ENCODE measurements at regions of chr17 and their contacts with region 1.

Region 1: DNA sequence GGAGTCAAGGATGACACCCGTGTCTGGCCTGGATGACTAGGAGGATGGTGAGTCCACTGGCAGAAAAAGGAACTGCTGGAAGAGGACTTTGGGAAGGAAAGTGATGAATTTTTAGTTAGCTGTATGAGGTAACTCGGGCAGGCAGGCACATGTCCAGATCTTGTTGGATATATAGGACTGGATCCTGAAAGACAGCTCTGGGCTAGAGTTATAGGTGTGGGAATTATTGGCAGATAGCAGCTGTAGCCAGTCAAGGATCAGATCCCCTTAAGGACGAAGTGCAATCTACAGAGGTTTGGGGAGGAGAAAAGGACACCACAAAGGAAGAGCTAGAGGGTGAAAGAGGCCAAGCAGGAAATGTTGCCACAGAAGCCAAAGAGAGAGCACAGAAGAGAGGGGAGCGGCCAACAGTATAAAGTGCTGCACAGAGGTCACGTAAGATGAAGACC is 10.1 kb downstream of the CYB5D1 start:
- DNase-seq: peak; percentile 74
- H3K4me3 ChIP-seq: no peak overlapping the region
- H3K27ac ChIP-seq: no peak overlapping the region
- H3K4me1 ChIP-seq: peaks cover 12% of the 10 kb centered on the region
- H3K27me3 ChIP-seq: no peaks in the 10 kb centered on the region
- CTCF ChIP-seq: peak in 1 of 2 donors; percentile 6

Region 2: DNA sequence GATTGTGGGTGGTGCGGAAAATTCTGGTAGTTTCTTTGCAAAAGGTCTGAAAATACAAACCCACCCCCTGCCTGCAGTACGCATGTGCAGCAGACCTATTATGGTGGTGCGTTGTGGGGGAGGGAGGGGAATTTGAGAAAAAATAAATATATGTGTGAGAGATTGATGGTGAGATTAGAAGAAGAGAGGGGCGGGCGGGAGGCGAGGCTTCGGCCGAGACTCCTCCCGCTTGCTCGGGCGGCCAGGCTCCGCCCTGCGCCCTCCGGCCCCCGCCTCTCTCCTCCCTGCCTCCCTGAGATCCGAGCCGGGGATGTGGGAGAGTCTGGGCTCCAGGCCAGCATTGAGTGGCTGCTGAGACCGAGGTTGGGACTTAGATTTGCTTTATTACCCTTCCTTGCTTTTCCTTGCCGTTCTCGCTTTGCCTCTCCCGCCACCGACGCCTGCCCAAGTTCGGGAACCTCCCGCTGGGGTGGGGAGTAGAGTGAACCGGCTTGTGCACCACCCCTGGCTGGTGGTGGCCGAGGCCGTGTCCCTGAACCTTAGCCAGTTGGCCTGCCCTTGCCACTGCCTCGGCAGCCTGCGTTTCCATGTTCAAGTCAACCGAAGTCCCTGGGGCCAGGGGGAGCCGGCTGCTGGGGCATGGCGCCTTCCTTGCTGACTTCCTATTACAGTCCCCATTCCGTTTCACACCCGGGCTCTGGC is 19.7 kb after region 1 on chr17:
- CTCF ChIA-PET with region 1: no interaction called
- dilution Hi-C with region 1: no loop called
- in situ Hi-C with region 1: no loop called
- intact Hi-C with region 1: loop called (anchors 2 kb)
- DNase-seq: peak; percentile 92
- H3K4me3 ChIP-seq: peak overlapping the region; percentile 80 to 91 (median 90)
- H3K27ac ChIP-seq: peak overlapping the region; percentile 70
- H3K4me1 ChIP-seq: peaks cover 44% of the 10 kb centered on the region
- H3K27me3 ChIP-seq: no peaks in the 10 kb centered on the region
- CTCF ChIP-seq: no peak

Measured in mammary epithelial cell (primary cell).